Activated CD4-positive, alpha-beta memory T cell treated with anti-CD3 and anti-CD28 coated beads, Interleukin-2, amount 10 ng/mL, durations not matched to agents 7 days and 5 days (primary cell): ENCODE measurements at regions of chr9 and their contacts with region 1.

Region 1: DNA sequence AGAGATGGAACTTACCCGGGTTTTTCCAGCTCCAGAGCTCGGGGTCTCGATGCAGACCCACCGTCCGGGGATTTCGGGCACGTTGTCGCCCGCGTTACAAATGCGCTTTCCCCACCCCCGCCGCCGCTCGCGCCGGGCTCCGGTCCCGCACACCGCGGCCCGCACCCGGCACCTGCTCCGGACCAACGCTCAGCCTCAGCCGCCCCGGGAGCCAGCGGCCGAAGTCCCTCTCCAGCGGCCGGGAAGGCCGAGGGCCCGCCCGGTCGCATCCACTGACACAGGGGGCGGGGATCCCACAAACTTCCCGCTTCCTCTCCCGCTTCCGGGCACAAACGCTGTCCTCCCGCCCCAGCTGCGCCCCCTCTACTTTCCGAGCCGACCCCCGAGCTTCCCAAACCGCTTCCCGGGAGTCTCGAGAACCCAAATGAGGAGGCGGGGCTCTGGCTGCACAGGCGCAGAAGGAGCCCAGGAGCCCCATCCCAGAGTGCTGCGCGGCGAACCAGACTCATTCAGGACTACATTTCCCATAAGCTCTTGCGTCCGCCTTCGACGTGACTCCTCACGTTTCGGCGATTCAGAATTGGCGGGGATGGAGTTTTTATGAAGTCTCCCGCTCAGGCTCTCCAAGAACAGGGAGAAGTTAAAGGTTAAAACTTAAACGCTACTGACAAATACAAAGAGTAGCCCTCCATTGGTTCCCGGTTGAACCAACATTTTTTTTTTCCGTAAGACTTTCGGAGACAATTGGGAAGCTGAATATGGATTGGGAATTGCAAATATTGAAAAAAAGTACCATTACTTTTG is at the start of gene ZNF782:
- DNase-seq: peak; percentile 88
- H3K4me3 Mint-ChIP-seq: peak within 1 kb of the TSS; percentile 99
- H3K27ac Mint-ChIP-seq: peak within 1 kb of the TSS; percentile 82
- H3K4me1 Mint-ChIP-seq: peaks cover 31% of the 10 kb centered on the region
- H3K27me3 Mint-ChIP-seq: peaks cover 17% of the 10 kb centered on the region
- total RNA-seq, gene ZNF782: 3.1 to 4.2 TPM

Region 2: GRCh38 chr9:96738147-96739027 is 115.9 kb before region 1 on chr9:
- CTCF ChIA-PET with region 1: no interaction called
- POLR2A ChIA-PET with region 1: no interaction called
- DNase-seq: no peak
- H3K4me3 Mint-ChIP-seq: no peak overlapping the region
- H3K27ac Mint-ChIP-seq: no peak overlapping the region
- H3K4me1 Mint-ChIP-seq: no peaks in the 10 kb centered on the region
- H3K27me3 Mint-ChIP-seq: no peaks in the 10 kb centered on the region

Region 3: DNA sequence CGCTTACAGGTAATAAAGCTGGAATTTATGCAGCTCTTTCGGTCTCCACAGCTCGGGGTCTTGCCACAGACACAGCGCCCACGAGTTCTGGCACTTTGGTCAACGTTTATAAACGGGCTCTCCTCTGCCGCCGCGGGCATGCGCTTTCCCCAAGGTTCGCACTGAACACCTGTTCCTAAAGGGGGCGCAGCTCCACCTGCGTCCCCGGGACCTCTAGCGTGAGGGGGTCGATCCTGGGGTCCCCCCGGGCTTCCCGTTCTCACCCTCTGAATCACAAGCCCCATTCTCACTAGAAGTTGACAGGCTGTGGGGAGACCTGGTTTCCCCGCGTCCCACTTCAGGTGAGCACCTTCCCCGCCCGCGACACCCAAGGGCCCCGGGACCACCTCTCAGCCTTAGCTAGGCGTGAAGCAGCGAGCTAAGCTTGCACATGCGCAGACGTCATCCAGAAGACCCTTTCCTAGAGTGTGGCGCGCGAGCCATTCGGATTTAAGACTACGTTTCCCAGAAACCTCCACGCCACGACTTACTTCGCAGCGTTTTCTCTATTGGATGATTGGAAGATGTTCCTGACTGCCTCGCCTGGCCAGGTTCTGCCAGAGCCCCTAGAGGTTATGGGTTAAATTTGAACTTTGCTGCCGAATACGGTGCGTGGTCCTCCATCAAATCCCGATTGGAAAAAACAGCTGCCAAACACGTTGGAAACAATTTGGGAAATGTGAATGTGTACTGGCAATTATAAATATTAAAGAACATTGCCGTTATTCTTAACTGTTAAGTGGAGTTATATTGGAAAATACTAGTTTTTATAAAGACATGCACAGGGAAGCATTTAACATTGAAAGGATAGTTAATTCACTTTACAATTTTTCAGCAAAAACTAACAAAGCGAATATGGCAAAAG is 21.4 kb after region 1 on chr9:
- CTCF ChIA-PET with region 1: interaction called, 32 read pairs
- POLR2A ChIA-PET with region 1: interaction called, 5 read pairs
- DNase-seq: peak; percentile 59
- H3K4me3 Mint-ChIP-seq: peak overlapping the region; percentile 76
- H3K27ac Mint-ChIP-seq: peak overlapping the region; percentile 48
- H3K4me1 Mint-ChIP-seq: peaks cover 26% of the 10 kb centered on the region
- H3K27me3 Mint-ChIP-seq: peaks cover 27% of the 10 kb centered on the region

Region 4: DNA sequence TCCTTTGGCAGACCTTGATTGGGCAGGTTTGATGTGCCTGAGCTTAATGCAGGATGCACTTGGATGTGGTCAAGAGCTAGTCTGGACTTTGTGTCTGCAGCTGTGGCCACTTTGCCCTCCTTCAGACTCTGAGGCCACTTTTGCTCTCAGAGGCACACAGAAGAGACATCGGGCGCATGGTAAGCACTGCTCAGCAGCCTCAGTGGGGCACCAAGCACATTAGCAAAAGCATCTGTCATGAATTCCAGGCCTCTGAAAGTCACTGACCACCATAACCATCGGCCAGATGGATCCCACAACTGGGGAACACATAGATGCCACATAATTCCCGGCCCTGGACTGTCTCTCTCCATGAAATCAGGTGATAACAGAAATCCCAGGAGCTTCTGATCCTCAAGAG is 34.3 kb after region 1 on chr9:
- CTCF ChIA-PET with region 1: no interaction called
- POLR2A ChIA-PET with region 1: no interaction called
- DNase-seq: no peak
- H3K4me3 Mint-ChIP-seq: no peak overlapping the region
- H3K27ac Mint-ChIP-seq: no peak overlapping the region
- H3K4me1 Mint-ChIP-seq: no peaks in the 10 kb centered on the region
- H3K27me3 Mint-ChIP-seq: no peaks in the 10 kb centered on the region

Region 5: DNA sequence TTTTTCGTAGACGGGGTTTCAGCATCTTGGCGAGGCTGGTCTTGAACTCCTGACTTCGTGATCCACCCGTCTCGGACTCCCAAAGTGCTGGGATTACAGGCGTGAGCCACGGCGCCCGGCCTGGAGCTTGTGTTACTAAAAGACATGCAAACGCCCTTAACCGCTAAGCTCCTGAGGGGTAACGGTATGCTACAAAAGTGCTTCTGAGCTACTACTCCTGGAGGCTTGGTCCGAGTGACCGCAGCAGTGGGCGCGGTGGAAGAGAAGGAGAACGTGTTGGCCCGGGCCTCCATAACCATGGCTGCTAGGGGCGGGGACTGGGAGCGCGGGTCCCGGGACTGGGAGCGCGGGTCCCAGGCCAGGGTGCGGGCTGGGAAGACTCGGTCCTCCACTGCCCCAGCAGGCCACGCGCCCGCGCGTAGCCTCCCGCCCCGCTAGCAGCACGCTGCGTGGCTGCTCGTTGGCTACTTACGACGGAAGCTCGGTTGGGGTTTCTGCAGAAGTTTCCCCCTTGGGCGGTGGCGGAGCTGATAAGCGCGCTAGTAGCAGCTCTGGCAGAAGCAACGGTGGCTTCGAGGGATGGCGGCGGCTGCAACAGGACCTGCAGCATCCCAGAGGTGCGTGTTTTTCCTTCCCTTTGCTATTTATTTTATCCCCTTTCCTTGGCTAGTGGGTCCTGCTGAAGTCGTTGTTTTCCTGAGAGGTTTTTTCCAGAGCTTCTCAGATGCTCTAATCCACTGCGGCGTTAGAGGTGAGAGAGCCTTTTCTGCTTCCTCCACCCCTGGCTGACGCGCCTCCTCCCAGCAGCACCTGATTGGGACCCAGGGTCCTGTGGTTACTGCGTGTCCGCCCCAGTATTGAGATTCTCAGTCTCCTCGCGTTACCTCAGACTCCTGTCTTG is 383.9 kb after region 1 on chr9:
- CTCF ChIA-PET with region 1: interaction called, 15 read pairs
- POLR2A ChIA-PET with region 1: interaction called, 5 read pairs
- DNase-seq: peak; percentile 87
- H3K4me3 Mint-ChIP-seq: peak overlapping the region; percentile 91
- H3K27ac Mint-ChIP-seq: peak overlapping the region; percentile 93
- H3K4me1 Mint-ChIP-seq: peaks cover 19% of the 10 kb centered on the region
- H3K27me3 Mint-ChIP-seq: no peaks in the 10 kb centered on the region

Region 6: DNA sequence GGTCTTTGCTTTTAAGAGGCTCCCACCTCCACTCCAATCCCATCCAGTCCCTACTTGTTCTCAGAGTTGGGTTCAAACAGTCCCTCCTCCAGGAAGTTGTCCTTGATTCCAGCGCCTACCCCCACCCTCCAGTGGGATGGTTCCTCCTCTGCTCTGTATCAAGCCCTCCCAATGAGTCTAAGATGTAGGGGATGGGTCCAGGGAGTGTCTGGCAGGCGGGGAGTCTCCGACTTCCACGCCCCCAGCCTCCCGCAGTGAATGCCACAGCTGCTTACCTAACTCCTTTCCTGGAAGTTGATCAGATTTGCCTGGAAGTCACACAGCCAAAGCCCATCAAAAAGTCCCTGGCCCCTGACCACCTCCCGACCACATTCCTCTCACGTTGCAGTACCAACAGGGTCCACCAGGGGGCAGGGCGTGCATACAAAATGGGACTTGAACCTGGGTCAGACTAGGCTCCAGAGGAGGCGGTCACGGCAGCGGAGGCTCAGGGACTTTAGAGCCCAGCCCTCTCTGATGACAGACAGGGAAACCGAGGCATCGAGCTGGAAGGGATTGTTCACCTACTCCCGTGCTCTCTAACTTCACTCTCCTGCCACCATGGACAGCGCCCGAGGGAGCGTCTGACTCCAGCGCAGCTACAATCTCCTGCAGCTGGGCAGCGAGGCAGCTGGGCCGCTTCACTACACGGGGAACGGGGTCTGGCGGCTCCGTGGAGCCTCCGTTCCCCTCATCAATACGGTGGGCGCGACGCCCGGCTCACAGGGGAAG is 532.6 kb after region 1 on chr9:
- CTCF ChIA-PET with region 1: interaction called, 13 read pairs
- POLR2A ChIA-PET with region 1: no interaction called
- DNase-seq: peak; percentile 76
- H3K4me3 Mint-ChIP-seq: no peak overlapping the region
- H3K27ac Mint-ChIP-seq: no peak overlapping the region
- H3K4me1 Mint-ChIP-seq: peaks cover 24% of the 10 kb centered on the region
- H3K27me3 Mint-ChIP-seq: peaks cover 31% of the 10 kb centered on the region

Region 7: GRCh38 chr9:97398999-97399758 is 544.9 kb after region 1 on chr9:
- CTCF ChIA-PET with region 1: interaction called, 21 read pairs
- POLR2A ChIA-PET with region 1: no interaction called
- DNase-seq: peak; percentile 70
- H3K4me3 Mint-ChIP-seq: no peak overlapping the region
- H3K27ac Mint-ChIP-seq: no peak overlapping the region
- H3K4me1 Mint-ChIP-seq: peaks cover 28% of the 10 kb centered on the region
- H3K27me3 Mint-ChIP-seq: peaks cover 56% of the 10 kb centered on the region

Region 8: DNA sequence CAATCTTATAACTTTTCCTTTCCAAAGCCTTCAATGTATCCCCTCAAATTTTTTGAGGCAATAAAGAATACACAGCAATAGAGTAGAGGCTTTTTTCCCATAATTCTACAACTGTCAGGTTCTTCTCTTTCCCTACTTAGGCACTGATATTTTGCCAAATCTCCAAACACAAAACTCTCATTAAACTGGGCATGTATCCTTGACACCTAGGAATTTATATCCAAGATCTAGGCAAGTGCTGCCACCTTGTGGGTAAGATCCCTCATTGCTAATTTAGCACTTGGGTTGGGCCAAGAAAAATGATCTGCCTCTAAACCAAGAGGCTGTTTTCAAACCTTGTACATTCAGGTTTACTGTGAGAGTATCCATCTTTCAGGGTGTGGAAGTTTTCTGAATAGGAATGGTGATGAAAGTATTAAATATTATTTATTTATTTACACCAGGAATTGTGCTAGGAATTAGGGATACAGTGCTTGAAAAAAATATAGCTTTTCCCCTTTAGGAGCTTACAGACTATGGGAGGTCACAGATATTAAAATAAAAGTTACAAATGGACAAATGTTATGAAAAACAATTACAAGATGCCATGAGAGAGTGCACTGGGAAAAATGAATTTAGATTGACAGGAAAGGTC is 761.3 kb after region 1 on chr9:
- CTCF ChIA-PET with region 1: interaction called, 11 read pairs
- POLR2A ChIA-PET with region 1: no interaction called
- DNase-seq: peak; percentile 61
- H3K4me3 Mint-ChIP-seq: no peak overlapping the region
- H3K27ac Mint-ChIP-seq: no peak overlapping the region
- H3K4me1 Mint-ChIP-seq: peaks cover 18% of the 10 kb centered on the region
- H3K27me3 Mint-ChIP-seq: no peaks in the 10 kb centered on the region